Dorsolateral prefrontal cortex (tissue), 120 donors: ENCODE measurements at regions of chr3 and their contacts with region 1.

Region 1: GRCh38 chr3:114902691-114903101 is 244.4 kb downstream of the ZBTB20 start:
- DNase-seq: no peak
- H3K4me3 ChIP-seq: peak overlapping the region in 4 of 59 donors; percentile 16 to 34 (median 16)
- H3K27ac ChIP-seq: peak overlapping the region in 57 of 59 donors; percentile 10 to 85 (median 72)
- H3K27me3 ChIP-seq: no peaks in the 10 kb centered on the region
- CTCF ChIP-seq: no peak

Region 2: DNA sequence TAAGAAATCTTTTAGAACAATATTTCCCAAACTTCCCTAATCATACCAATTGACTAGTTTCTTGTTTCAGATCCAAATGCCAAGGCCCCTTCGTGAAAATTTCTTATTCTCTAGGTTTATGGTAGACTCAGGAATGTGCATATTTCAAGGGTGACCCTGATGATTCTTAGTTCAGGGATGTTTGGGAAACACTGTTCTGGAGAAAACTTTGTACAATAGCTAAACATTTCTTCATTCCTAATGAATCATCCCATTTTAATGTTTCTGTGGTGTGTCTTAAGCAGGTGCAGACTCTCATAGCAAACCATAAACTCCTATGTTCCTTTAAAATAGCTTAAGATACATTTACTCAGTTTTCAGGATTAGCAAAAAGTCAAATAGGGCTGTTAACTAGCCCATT is 294.4 kb before region 1 on chr3:
- intact Hi-C with region 1: no loop called
- DNase-seq: no peak
- H3K4me3 ChIP-seq: no peak overlapping the region
- H3K27ac ChIP-seq: peak overlapping the region in 2 of 59 donors; percentile 7 to 27
- H3K27me3 ChIP-seq: no peaks in the 10 kb centered on the region
- CTCF ChIP-seq: no peak

Region 3: DNA sequence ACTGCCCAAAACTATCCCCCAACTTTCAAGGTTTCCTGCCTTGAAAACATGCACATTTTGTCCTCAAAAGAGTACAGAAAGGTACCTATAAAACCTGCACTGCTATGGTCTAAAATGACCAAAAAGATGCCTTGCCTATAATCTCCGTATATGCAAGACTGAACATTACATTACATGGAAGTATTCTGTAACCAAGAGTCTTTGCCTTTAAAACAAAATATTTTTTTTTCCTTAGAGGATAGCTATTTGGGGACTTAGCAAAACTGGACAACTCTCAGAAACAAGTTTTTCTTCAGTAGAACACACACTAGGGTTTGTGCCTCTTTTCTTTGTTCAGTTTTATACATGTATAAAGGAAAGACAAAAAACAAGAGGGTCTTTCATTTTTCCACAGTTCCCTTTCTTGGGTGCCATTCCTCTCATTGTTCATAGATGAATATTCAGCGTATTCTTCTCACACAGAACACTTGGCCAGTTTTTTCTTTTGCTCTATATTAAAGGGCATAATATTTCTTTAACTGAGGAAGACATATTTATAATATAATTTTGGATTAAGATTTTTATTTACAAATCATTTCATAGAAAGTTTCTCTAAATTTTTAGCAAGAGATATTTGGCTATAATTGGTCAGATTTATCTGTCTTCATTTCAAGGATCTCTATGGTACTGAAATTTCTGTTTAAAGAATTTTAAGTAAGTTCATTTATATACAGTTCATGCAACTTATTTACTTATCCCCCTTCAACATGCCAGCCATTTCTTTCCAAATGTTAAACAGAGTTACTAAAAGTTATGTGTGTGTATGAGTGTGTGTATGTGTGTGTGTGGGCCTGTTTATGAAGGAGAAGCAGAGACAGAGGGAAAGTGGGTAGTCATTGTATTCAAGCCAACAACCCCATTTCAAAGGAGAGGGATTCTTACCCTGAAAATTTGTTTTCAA is 101.8 kb after region 1 on chr3:
- intact Hi-C with region 1: loop called in 1 of 2 experiments (anchors 10 kb)
- DNase-seq: no peak
- H3K4me3 ChIP-seq: peak overlapping the region in 9 of 59 donors; percentile 4 to 34 (median 12)
- H3K27ac ChIP-seq: peak overlapping the region in 58 of 59 donors; percentile 10 to 92 (median 80)
- H3K27me3 ChIP-seq: no peaks in the 10 kb centered on the region
- CTCF ChIP-seq: peak in 2 of 56 donors; percentile 7 to 9